ENCODE measurements at regions of chr14 and their contacts with region 1.

Region 1: GRCh38 chr14:102096214-102097114 is 9.6 kb upstream of the HSP90AA1 start:
- DNase-seq: peak; percentile 76 to 97 (median 89)

Region 2: GRCh38 chr14:101964297-101965144 is 131.9 kb before region 1 on chr14 and contains the start of gene DYNC1H1:
- intact Hi-C with region 1: loop called (anchors 2 kb)
- DNase-seq: peak; percentile 85 to 99 (median 94)

Region 3: GRCh38 chr14:102034301-102034700 is 62.2 kb before region 1 on chr14:
- intact Hi-C with region 1: no loop called
- DNase-seq: peak in 2 of 10 donors; percentile 15 to 64

Region 4: DNA sequence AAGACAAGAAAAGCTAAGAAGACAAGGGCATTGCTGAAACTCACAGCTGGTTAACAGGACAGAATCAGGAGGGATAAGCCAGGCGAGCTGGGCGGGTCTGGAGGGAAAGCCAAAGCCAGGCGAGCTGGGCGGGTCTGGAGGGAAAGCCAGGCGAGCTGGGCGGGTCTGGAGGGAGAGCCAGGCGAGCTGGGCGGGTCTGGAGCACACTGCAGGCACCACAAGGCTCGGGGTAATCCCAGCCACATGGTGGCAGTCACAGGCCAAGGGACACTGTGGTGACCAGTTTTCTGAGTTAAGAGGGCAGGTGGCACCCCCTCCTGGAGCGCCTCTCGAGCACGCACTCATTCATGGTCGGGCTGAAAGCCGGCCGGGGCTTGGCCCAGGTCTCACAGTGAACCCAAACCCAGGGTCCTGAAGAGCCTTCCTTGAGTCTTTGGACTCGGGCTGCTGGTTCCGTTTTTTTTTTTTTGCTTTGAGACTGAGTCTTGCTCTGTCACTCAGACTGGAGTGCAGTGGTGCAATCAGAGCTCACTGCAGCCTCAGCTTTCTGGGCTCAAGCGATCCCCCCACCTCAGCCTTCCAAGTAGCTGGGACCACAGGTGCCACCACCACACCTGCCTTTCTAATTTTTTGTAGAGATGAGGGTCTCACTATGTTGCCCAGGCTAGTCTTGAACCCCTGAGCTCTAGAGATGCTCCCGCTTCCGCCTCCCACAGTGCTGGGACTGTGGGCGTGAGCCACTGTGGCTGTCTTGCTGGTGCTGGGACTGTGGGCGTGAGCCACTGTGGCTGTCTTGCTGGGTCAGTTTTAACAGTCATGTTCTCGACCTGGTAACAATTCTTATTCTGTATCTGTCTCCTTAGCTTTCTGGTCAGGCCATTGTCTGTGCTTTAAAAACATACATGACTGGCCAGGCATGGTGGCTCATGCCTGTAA is 49.9 kb before region 1 on chr14:
- intact Hi-C with region 1: loop called (anchors 5 kb)
- DNase-seq: peak; percentile 55 to 96 (median 75)

Region 5: DNA sequence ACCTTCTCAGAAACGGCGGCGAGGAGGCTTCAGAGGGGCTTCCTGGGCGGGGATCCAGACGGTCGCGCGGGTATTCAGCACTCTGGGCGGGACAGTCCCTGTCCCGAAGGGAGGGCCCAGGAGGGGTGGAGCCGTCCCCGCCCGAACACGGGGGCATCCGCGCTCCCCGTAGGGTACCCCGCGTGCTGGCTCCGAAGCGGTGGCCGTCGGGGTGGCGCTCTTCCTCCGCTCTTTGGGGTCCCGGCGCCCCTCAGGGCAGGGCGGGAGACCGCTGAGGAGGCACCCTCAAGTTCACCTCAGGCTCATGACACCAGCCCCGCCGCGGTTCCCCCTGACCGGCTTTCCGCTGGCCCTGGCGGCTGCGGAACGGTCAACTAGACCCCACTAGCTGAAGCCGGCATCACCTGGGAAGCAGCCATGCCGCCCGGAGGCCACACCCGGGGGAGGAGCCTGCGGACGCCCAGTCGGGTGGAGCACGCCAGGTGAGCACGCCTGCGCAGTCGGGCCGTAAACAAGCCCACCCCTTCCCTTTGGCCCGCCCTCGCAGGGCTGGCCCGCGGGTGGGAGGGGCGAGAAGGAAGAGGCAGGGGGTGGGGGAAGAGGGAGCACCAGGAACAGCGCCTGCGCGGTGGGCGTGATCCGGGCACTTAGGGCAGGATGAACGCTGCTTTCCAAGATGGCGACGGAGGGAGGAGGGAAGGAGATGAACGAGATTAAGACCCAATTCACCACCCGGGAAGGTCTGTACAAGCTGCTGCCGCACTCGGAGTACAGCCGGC is 43.0 kb after region 1 on chr14 and contains the start of gene WDR20:
- intact Hi-C with region 1: loop called (anchors 5 kb)
- DNase-seq: peak; percentile 97 to 100 (median 98)

Region 6: DNA sequence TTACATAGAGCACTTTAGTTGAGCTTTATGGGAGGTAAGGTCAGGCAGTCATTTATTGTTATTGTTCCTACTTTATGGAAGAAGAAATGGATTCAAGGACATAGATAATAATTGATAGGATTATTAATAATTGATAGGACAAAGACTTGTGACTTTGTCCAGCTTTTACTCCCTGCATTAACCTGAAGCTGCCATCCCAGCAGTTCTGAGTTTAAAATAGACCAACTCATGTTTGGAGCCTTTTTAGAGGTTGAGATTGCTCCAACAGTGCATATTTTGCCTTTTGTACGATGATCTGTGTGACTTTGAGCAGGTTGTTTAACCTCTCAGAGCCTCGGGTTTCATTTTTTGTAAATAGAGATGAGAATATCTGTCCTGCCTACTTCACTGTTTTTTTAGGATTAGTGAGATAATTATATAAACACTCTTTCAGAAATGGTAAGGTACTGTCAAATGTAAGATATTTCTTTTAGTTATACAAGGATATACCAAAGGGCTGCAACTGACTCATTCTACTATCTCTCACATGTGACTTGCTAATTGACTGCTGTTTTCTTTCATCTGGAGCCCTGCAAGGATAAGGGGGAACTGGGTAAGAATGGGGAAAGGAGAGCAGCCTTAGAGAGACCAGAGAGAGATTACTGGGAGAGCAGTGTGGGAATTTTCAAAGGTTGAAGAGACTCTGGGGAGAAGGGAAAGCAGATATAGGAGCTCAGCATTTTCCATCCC is 58.5 kb after region 1 on chr14:
- intact Hi-C with region 1: no loop called
- DNase-seq: no peak

Region 7: GRCh38 chr14:102192664-102193502 is 96.4 kb after region 1 on chr14:
- intact Hi-C with region 1: no loop called
- DNase-seq: peak in 5 of 10 donors; percentile 38 to 93 (median 74)

Measured in posterior cingulate gyrus (tissue), 11 donors.